K562 (cell line): ENCODE measurements at regions of chr1 and their contacts with region 1.

Region 1: GRCh38 chr1:222157612-222158011 is 390.3 kb downstream of the HHIPL2 start:
- DNase-seq: no peak
- ATAC-seq: no peak
- H3K4me3 ChIP-seq: no peak overlapping the region
- H3K27ac ChIP-seq: no peak overlapping the region
- H3K4me1 ChIP-seq: no peaks in the 10 kb centered on the region
- H3K27me3 ChIP-seq: no peaks in the 10 kb centered on the region
- CTCF ChIP-seq: no peak
- EP300 ChIP-seq: no peak
- POLR2A ChIP-seq: no peak
- RAD21 ChIP-seq: no peak

Region 2: GRCh38 chr1:221777431-221778072 is 380.1 kb before region 1 on chr1:
- CTCF ChIA-PET with region 1: no interaction called
- POLR2A ChIA-PET with region 1: no interaction called
- in situ Hi-C with region 1: no loop called
- intact Hi-C with region 1: no loop called
- DNase-seq: no peak
- ATAC-seq: no peak
- H3K4me3 ChIP-seq: no peak overlapping the region
- H3K27ac ChIP-seq: no peak overlapping the region
- H3K4me1 ChIP-seq: peaks cover 0 to 14% of the 10 kb centered on the region in 2 experiments; a peak in 2 of 5 replicates
- H3K27me3 ChIP-seq: no peaks in the 10 kb centered on the region; a peak in 1 of 5 replicates
- CTCF ChIP-seq: no peak
- EP300 ChIP-seq: no peak
- POLR2A ChIP-seq: no peak
- RAD21 ChIP-seq: no peak

Region 3: DNA sequence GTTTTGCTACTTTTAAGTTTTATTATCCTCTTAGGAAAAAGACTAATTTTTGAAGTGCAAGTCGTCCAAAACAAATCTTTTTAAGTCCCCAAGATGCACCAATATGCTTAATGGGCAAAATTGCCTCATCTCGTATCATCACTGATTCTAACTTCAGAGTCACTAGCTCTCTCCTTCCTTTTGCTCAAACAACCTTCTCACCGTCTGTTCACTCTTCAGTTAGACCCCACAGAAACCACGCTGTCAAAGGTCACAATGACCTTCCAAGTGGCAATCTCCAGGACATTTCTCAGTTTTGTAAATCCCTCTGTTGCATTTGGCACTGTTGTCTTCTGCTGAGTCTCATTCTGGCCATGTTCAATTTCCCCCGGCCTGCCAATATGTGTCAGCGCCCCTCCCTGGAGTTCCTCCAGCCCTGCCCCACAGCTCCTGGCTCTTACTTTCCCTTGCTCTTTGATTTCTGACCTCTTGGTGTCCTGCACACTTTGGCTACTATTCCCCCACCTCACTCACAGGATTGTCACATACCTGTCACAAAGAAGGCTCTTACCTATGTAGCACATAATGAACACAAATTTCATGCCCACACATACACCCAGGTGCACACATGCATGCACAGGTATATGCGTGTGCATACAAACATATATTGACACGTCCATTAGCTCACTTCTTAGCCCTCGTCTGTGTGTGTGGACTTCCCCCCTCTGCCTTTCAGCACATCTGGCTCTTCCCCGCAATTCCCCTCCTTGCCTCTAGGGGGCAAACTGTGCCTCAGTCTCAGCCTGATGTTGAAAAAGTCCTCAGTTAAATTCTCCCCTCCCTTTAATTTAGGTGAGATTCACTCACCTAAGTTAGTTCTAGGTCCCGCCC is 61.8 kb before region 1 on chr1:
- CTCF ChIA-PET with region 1: no interaction called
- POLR2A ChIA-PET with region 1: no interaction called
- in situ Hi-C with region 1: no loop called
- intact Hi-C with region 1: no loop called
- DNase-seq: peak; percentile 60 to 76 (median 68)
- ATAC-seq: peak; percentile 93
- H3K4me3 ChIP-seq: no peak overlapping the region
- H3K27ac ChIP-seq: no peak overlapping the region
- H3K4me1 ChIP-seq: no peaks in the 10 kb centered on the region
- H3K27me3 ChIP-seq: no peaks in the 10 kb centered on the region; a peak in 1 of 5 replicates
- CTCF ChIP-seq: peak; percentile 67 to 92 (median 78)
- EP300 ChIP-seq: no peak
- POLR2A ChIP-seq: no peak
- RAD21 ChIP-seq: peak; percentile 57 to 62

Region 4: DNA sequence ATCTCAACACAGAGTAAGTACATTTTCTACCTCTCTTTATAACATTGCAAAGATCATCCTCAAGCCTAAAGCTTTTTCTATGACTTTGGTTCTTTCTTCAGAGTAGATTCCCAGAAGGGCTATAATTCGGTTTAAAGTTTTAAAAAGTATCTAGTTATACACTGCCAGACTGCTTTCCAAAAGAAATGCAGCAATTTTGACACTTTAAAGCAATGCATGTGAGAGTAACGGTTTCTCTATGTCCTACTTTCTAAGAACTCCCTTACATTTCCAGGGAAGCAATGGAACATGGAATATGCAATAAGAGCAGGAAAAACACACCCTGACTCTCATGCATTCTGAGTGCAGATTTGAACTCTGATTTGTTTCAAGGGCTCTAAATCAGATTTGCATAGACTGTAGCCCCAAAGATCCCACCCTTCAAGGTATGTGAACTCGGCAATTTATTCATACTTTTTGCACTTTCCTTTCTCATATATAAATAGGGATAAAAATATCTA is 58.7 kb after region 1 on chr1:
- CTCF ChIA-PET with region 1: no interaction called
- POLR2A ChIA-PET with region 1: no interaction called
- in situ Hi-C with region 1: loop called (anchors 5 kb)
- intact Hi-C with region 1: no loop called
- DNase-seq: no peak
- ATAC-seq: no peak
- H3K4me3 ChIP-seq: no peak overlapping the region
- H3K27ac ChIP-seq: no peak overlapping the region
- H3K4me1 ChIP-seq: no peaks in the 10 kb centered on the region
- H3K27me3 ChIP-seq: no peaks in the 10 kb centered on the region
- CTCF ChIP-seq: no peak
- EP300 ChIP-seq: no peak
- POLR2A ChIP-seq: no peak
- RAD21 ChIP-seq: no peak